AG04450 (cell line): ENCODE measurements at regions of chr3 and their contacts with region 1.

Region 1: GRCh38 chr3:187679638-187680396 is 9.6 kb upstream of the SST start:
- DNase-seq: peak; percentile 24
- H3K4me3 ChIP-seq: no peak overlapping the region
- H3K27ac ChIP-seq: no peak overlapping the region
- H3K27me3 ChIP-seq: peaks cover 29% of the 10 kb centered on the region
- CTCF ChIP-seq: peak; percentile 98

Region 2: GRCh38 chr3:187139126-187139894 is 540.5 kb before region 1 on chr3 and contains the start of gene RPL39L:
- CTCF ChIA-PET with region 1: interaction called, 29 read pairs
- POLR2A ChIA-PET with region 1: interaction called, 3 read pairs
- DNase-seq: peak; percentile 45
- H3K4me3 ChIP-seq: peak within 1 kb of the TSS; percentile 79
- H3K27ac ChIP-seq: peak within 1 kb of the TSS; percentile 57
- H3K27me3 ChIP-seq: peaks cover 9% of the 10 kb centered on the region
- CTCF ChIP-seq: peak; percentile 96
- polyA plus RNA-seq, gene RPL39L: 14.4 and 17.0 TPM in 2 replicates

Region 3: GRCh38 chr3:187227658-187228258 is 452.1 kb before region 1 on chr3:
- CTCF ChIA-PET with region 1: interaction called, 286 read pairs
- POLR2A ChIA-PET with region 1: no interaction called
- DNase-seq: peak; percentile 43
- H3K4me3 ChIP-seq: no peak overlapping the region
- H3K27ac ChIP-seq: no peak overlapping the region
- H3K27me3 ChIP-seq: no peaks in the 10 kb centered on the region
- CTCF ChIP-seq: no peak

Region 4: GRCh38 chr3:187291001-187291511 is 388.8 kb before region 1 on chr3:
- CTCF ChIA-PET with region 1: interaction called, 14 read pairs
- POLR2A ChIA-PET with region 1: no interaction called
- DNase-seq: peak; percentile 24
- H3K4me3 ChIP-seq: peak overlapping the region; percentile 73
- H3K27ac ChIP-seq: peak overlapping the region; percentile 47
- H3K27me3 ChIP-seq: no peaks in the 10 kb centered on the region
- CTCF ChIP-seq: no peak

Region 5: DNA sequence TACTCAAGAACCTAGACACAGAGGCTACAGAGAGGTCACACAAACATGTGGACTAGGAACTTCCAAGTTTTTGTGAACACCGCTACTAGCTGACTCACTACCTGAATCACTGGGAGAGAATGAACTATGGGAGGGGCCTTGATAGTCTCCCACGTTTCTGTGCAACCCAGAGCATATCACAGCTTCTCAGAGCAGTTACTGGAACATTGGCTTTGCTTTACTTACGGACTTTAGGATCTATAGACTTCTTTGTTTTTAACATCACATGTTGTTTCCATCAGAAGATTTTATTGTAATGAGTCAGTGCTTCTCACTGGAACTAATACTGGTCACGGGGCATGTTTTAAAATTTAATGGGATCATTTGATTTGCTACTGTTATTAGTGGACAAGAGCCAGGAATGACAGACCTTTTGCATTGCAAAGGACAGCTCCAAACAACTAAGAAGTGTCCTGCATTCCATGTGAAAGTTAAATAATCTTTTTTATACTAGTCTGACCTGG is 276.0 kb before region 1 on chr3:
- CTCF ChIA-PET with region 1: interaction called, 10 read pairs
- POLR2A ChIA-PET with region 1: no interaction called
- DNase-seq: peak; percentile 86
- H3K4me3 ChIP-seq: no peak overlapping the region
- H3K27ac ChIP-seq: peak overlapping the region; percentile 80
- H3K27me3 ChIP-seq: no peaks in the 10 kb centered on the region
- CTCF ChIP-seq: no peak

Region 6: DNA sequence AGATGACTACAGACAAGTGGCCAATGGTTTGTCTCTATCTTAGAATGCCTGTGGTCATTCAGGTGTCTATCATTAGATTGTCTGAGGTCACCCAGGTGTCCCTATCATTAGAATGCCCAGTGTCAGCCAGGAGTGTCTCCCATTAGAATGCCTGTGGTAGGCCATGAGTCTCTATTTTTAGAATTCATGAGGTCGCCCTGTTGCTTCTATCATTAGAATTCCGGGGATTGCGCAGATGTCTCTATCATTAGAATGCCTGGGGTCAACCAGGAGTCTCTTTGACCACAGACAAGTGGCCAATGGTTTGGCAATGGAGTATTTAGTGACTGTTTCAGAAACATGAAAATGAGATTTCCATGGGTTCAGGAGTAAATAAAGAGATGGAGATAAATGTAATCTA is 15.0 kb after region 1 on chr3:
- CTCF ChIA-PET with region 1: interaction called, 40 read pairs
- POLR2A ChIA-PET with region 1: no interaction called
- DNase-seq: no peak
- H3K4me3 ChIP-seq: no peak overlapping the region
- H3K27ac ChIP-seq: no peak overlapping the region
- H3K27me3 ChIP-seq: peaks cover 22% of the 10 kb centered on the region
- CTCF ChIP-seq: no peak